Activated CD4-positive, alpha-beta T cell treated with anti-CD3 and anti-CD28 coated beads, Interleukin-2, amount 10 ng/mL, durations not matched to agents 24 days and 14 days (primary cell): ENCODE measurements at regions of chr16 and their contacts with region 1.

Region 1: GRCh38 chr16:57314161-57314785 is 29.8 kb upstream of the PLLP start:
- DNase-seq: peak; percentile 63
- H3K4me3 Mint-ChIP-seq: no peak overlapping the region
- H3K27ac Mint-ChIP-seq: peak overlapping the region; percentile 27
- H3K4me1 Mint-ChIP-seq: peaks cover 16% of the 10 kb centered on the region
- H3K27me3 Mint-ChIP-seq: peaks cover 2% of the 10 kb centered on the region

Region 2: GRCh38 chr16:56888806-56889205 is 425.5 kb before region 1 on chr16:
- intact Hi-C with region 1: no loop called
- DNase-seq: no peak
- H3K4me3 Mint-ChIP-seq: no peak overlapping the region
- H3K27ac Mint-ChIP-seq: no peak overlapping the region
- H3K4me1 Mint-ChIP-seq: no peaks in the 10 kb centered on the region
- H3K27me3 Mint-ChIP-seq: no peaks in the 10 kb centered on the region

Region 3: DNA sequence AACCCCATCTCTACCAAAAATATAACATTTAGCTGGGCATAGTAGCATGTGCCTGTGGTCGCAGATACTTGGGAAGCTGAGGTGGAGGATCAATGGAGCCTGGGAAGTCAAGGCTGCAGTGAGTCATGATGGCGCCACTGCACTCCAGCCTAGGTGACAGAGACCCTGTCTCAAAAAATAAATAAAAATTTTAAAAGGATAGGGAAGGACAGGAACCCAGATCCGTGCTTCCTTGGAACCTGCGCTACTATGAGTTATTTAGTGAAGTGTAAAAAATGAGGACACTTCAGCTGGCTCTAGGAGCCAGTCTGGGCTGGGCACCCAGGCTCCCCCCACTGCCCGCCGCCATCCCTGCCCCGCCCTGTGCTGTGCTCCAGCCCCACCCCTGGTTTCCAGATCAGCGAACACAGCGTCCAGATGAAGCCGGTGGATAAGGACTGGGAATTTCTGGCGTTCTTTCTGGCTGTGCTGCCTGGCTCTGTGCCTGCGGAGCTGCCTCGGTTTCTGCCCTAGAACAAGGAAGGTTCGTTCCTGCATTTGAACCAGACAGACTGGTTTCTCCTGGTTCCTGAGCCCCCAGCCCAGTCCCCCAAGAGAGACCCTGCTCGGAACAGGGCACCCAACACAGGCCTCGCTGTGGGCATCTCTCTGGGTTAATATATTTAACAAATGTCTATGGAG is 48.3 kb before region 1 on chr16:
- intact Hi-C with region 1: no loop called
- DNase-seq: no peak
- H3K4me3 Mint-ChIP-seq: peak overlapping the region; percentile 36
- H3K27ac Mint-ChIP-seq: peak overlapping the region; percentile 80
- H3K4me1 Mint-ChIP-seq: peaks cover 23% of the 10 kb centered on the region
- H3K27me3 Mint-ChIP-seq: no peaks in the 10 kb centered on the region

Region 4: DNA sequence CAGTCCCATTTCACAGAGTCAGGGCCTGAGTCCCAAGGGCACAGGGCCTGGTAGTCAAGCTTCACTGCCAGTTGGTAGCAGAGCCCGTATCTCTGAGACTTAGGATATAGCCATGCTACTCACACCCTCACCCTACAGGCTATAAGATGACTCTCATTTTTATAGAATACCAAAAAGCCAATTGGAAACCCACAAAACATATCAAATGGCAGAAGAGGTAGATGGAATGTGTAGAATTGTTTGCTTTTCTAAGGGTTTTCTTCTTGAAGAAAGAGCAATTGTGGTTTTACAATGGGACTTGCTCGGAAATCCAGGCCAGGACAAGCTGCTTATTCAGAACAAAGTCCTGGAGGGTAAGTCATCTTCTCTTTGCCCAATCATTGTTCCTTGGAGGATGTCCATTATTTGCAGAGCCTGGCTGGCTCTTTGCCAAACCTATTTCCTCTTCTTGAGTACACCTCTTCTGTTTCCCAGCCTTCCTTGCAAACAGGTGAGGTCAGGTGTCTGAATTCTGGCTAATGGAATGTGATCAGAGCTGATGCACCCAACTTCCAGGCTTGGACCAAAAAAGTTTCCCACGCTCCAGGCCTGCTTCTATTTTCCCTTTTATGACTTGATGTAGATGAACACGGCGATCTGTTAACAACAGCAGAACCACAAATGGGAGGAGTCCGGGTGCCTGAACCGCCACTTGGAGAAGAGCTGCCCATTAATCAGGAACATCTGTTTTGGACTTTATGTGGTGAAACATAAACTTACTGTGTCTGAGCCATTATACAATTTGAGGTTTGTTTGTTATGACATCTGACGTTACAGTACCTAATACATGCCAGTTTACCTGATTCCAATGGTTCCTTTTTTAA is 27.4 kb after region 1 on chr16:
- intact Hi-C with region 1: loop called (anchors 1 kb)
- DNase-seq: no peak
- H3K4me3 Mint-ChIP-seq: no peak overlapping the region
- H3K27ac Mint-ChIP-seq: no peak overlapping the region
- H3K4me1 Mint-ChIP-seq: peaks cover 20% of the 10 kb centered on the region
- H3K27me3 Mint-ChIP-seq: peaks cover 10% of the 10 kb centered on the region